Naive thymus-derived CD4-positive, alpha-beta T cell (primary cell): ENCODE measurements at regions of chr22 and their contacts with region 1.

Region 1: GRCh38 chr22:20399866-20400605 is 6.1 kb downstream of the ZNF74 start:
- DNase-seq: no peak
- ATAC-seq: no peak
- H3K4me3 ChIP-seq: no peak overlapping the region
- H3K4me3 Mint-ChIP-seq: no peak overlapping the region
- H3K27ac ChIP-seq: no peak overlapping the region
- H3K27ac Mint-ChIP-seq: peak overlapping the region in 1 of 9 donors; percentile 40
- H3K4me1 ChIP-seq: peaks cover 5 to 17% of the 10 kb centered on the region in 2 donors
- H3K4me1 Mint-ChIP-seq: peaks cover 26 to 56% (median 48%) of the 10 kb centered on the region in 7 donors
- H3K27me3 ChIP-seq: no peaks in the 10 kb centered on the region
- H3K27me3 Mint-ChIP-seq: no peaks in the 10 kb centered on the region

Region 2: DNA sequence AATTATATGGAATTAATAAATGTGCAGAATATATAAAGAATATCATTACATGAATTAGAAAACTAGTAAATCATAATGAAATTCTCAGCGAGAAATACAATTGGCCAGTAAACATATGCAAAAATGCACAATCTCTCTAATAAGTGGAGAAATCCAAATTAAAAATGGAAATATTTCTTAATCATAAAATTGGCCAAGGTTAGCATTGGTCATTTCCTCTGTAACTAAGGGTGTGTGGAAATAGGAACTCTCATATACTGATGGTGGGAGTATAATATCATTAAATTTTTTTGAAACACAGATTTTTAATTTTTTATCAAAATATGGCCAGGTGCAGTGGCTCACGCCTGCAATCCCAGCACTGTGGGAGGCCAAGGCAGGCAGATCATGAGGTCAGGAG is 13.7 kb before region 1 on chr22:
- CTCF ChIA-PET with region 1: no interaction called
- POLR2A ChIA-PET with region 1: no interaction called
- intact Hi-C with region 1: loop called in 1 of 2 experiments (anchors 1 kb)
- DNase-seq: no peak
- ATAC-seq: no peak
- H3K4me3 ChIP-seq: no peak overlapping the region
- H3K4me3 Mint-ChIP-seq: no peak overlapping the region
- H3K27ac ChIP-seq: no peak overlapping the region
- H3K27ac Mint-ChIP-seq: no peak overlapping the region
- H3K4me1 ChIP-seq: no peaks in the 10 kb centered on the region
- H3K4me1 Mint-ChIP-seq: no peaks in the 10 kb centered on the region
- H3K27me3 ChIP-seq: no peaks in the 10 kb centered on the region
- H3K27me3 Mint-ChIP-seq: peaks cover 0 to 41% (median 0%) of the 10 kb centered on the region in 5 donors

Region 3: GRCh38 chr22:20559206-20559760 is 159.2 kb after region 1 on chr22:
- CTCF ChIA-PET with region 1: no interaction called
- POLR2A ChIA-PET with region 1: no interaction called
- intact Hi-C with region 1: no loop called
- DNase-seq: no peak
- ATAC-seq: no peak
- H3K4me3 ChIP-seq: no peak overlapping the region
- H3K4me3 Mint-ChIP-seq: peak overlapping the region in 2 of 10 donors; percentile 16 to 87
- H3K27ac ChIP-seq: no peak overlapping the region
- H3K27ac Mint-ChIP-seq: peak overlapping the region; percentile 90 to 99 (median 98)
- H3K4me1 ChIP-seq: peaks cover 53 to 59% of the 10 kb centered on the region in 2 donors
- H3K4me1 Mint-ChIP-seq: peaks cover 57 to 87% (median 78%) of the 10 kb centered on the region in 7 donors
- H3K27me3 ChIP-seq: no peaks in the 10 kb centered on the region
- H3K27me3 Mint-ChIP-seq: no peaks in the 10 kb centered on the region